Head of caudate nucleus (tissue), 42 donors: ENCODE measurements at regions of chrX and their contacts with region 1.

Region 1: GRCh38 chrX:77900688-77901087 is 1.4 kb downstream of the COX7B start:
- DNase-seq: no peak

Region 2: GRCh38 chrX:77446029-77446585 is 454.6 kb before region 1 on chrX:
- intact Hi-C with region 1: no loop called
- DNase-seq: peak in 23 of 42 donors; percentile 2 to 47 (median 24)

Region 3: GRCh38 chrX:77527233-77528001 is 373.3 kb before region 1 on chrX:
- intact Hi-C with region 1: loop called (anchors 10 kb)
- DNase-seq: peak in 36 of 42 donors; percentile 4 to 59 (median 29)

Region 4: GRCh38 chrX:78029663-78030062 is 129.0 kb after region 1 on chrX:
- intact Hi-C with region 1: loop called (anchors 10 kb)
- DNase-seq: peak in 40 of 42 donors; percentile 5 to 69 (median 36)